ENCODE measurements at regions of chr19 and their contacts with region 1.

Region 1: GRCh38 chr19:2061495-2062381 is 10.7 kb upstream of the MKNK2 start:
- DNase-seq: peak; percentile 93 to 98
- H3K4me3 ChIP-seq: peak overlapping the region; percentile 41 to 68 (median 54)
- H3K27ac ChIP-seq: peak overlapping the region; percentile 92
- H3K4me1 ChIP-seq: peaks cover 4 to 28% (median 19%) of the 10 kb centered on the region in 4 experiments
- H3K27me3 ChIP-seq: no peaks in the 10 kb centered on the region
- CTCF ChIP-seq: peak in 2 of 3 experiments; percentile 0 to 4; a peak in 2 of 4 replicates
- EP300 ChIP-seq: no peak
- POLR2A ChIP-seq: peak in 1 of 2 experiments; percentile 76; a peak in 2 of 3 replicates
- RAD21 ChIP-seq: no peak; a peak in 1 of 4 replicates

Region 2: DNA sequence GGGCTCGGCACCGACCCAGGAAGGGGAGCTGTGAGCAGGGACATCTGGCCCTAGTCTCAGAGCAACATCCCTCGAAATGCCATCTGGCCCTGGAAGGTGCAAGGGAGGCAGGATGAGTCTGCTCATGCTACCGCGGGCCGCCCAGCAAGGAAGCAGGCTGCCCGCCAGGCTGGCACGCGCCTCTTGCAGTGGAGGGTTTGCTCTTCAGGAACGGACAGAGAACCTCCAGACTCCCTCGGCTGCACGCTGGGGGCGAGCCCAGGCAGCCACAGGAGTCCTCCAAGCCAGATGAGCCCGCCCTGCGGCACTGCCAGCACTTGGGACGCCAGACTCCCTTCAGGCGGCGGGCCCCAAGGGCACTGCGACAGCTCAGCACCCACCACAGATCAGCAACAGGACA is 239.5 kb before region 1 on chr19:
- CTCF ChIA-PET with region 1: no interaction called
- POLR2A ChIA-PET with region 1: no interaction called
- DNase-seq: no peak
- H3K4me3 ChIP-seq: no peak overlapping the region
- H3K27ac ChIP-seq: no peak overlapping the region
- H3K4me1 ChIP-seq: peaks cover 0 to 8% (median 5%) of the 10 kb centered on the region in 4 experiments; a peak in 6 of 7 replicates
- H3K27me3 ChIP-seq: no peaks in the 10 kb centered on the region
- CTCF ChIP-seq: no peak
- EP300 ChIP-seq: no peak
- POLR2A ChIP-seq: no peak
- RAD21 ChIP-seq: no peak

Region 3: DNA sequence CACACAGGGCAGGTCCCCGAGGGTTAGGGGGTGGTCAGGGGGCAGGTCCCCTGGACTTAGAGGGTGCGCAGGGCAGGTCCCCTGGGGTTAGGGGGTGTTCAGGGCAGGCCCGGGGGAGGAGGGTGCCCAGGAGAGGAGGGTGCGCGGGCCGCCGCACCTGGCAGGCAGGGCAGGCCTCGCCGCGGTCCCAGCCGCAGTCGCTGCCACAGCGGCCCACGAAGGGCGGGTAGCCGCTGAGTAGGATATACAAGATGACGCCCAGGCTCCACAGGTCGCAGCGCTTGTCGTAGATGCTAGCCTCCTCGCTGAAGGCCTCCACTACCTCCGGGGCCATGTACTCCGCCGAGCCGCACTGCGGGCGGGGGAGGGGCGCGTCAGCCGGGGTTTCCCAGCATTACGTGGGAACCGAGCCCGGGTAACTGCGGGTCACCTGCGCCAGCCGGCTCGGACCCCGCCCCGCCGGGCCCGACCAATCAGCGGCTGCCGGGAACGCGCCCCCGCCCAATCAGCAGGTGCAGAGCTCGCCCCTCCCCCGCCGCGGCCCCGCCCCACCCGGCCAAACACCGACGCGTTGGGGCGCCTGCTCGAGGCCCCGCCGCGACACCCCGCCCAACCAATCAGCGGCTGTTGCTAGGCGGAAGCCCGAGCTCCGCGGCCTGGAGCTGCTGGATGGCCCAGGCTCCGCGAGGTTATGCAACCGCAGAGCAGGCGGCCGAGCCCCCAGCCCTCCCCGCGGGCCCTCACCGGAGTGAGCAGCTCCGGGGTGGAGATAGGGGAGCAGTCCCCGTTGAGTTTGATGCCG is 19.9 kb before region 1 on chr19:
- CTCF ChIA-PET with region 1: interaction called, 4 read pairs
- POLR2A ChIA-PET with region 1: interaction called, 524 read pairs
- DNase-seq: peak; percentile 80 to 97
- H3K4me3 ChIP-seq: peak overlapping the region; percentile 2 to 50 (median 12); a peak in 5 of 8 replicates
- H3K27ac ChIP-seq: peak overlapping the region; percentile 94
- H3K4me1 ChIP-seq: peaks cover 0 to 19% (median 14%) of the 10 kb centered on the region in 4 experiments; a peak in 5 of 7 replicates
- H3K27me3 ChIP-seq: no peaks in the 10 kb centered on the region
- CTCF ChIP-seq: no peak
- EP300 ChIP-seq: no peak; a peak in 1 of 3 replicates
- POLR2A ChIP-seq: peak in 1 of 2 experiments; percentile 55; a peak in 2 of 3 replicates
- RAD21 ChIP-seq: 0 out of 4 replicates have a peak, but pooled peaks of 1 of the 2 experiments have one; percentile 1

Region 4: GRCh38 chr19:2207991-2208860 is 146.5 kb after region 1 on chr19:
- CTCF ChIA-PET with region 1: no interaction called
- POLR2A ChIA-PET with region 1: no interaction called
- DNase-seq: peak in 1 of 2 experiments; percentile 72
- H3K4me3 ChIP-seq: no peak overlapping the region
- H3K27ac ChIP-seq: no peak overlapping the region
- H3K4me1 ChIP-seq: no peaks in the 10 kb centered on the region
- H3K27me3 ChIP-seq: no peaks in the 10 kb centered on the region
- CTCF ChIP-seq: peak; percentile 12 to 29 (median 21); a peak in 3 of 4 replicates
- EP300 ChIP-seq: no peak
- POLR2A ChIP-seq: no peak
- RAD21 ChIP-seq: peak in 1 of 2 experiments; percentile 33; a peak in 3 of 4 replicates